ENCODE measurements at regions of chr2 and their contacts with region 1.

Region 1: GRCh38 chr2:14016289-14016955 is 616.1 kb upstream of the LRATD1 start:
- DNase-seq: no peak
- H3K4me3 ChIP-seq: no peak overlapping the region
- H3K27ac ChIP-seq: no peak overlapping the region
- H3K4me1 ChIP-seq: no peaks in the 10 kb centered on the region
- H3K27me3 ChIP-seq: no peaks in the 10 kb centered on the region
- CTCF ChIP-seq: no peak
- EP300 ChIP-seq: no peak
- POLR2A ChIP-seq: no peak

Region 2: DNA sequence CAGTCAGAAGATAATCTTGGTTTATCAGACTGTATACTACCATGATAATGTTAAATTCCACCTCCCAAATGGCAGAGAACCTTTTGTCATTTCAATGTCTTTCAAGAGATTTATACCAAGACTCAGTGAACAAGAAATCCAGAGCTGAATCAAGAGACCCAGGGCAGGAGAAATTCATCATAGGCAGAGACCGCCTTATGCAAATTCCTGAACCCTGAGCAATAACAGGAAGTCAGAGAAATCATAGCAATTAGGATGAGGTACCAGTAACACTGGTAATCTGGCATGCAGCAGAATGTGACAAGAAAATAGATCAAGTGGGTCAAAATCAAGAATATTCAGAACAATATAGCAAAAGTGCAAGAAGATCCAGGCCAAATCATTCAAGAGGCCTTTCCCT is 203.7 kb after region 1 on chr2:
- in situ Hi-C with region 1: no loop called
- intact Hi-C with region 1: no loop called
- DNase-seq: no peak
- H3K4me3 ChIP-seq: no peak overlapping the region
- H3K27ac ChIP-seq: no peak overlapping the region
- H3K4me1 ChIP-seq: no peaks in the 10 kb centered on the region
- H3K27me3 ChIP-seq: no peaks in the 10 kb centered on the region
- CTCF ChIP-seq: no peak
- EP300 ChIP-seq: no peak
- POLR2A ChIP-seq: no peak

Region 3: GRCh38 chr2:15449556-15450236 is 1433.3 kb after region 1 on chr2:
- in situ Hi-C with region 1: no loop called
- intact Hi-C with region 1: loop called (anchors 5 kb)
- DNase-seq: no peak
- H3K4me3 ChIP-seq: no peak overlapping the region
- H3K27ac ChIP-seq: no peak overlapping the region
- H3K4me1 ChIP-seq: no peaks in the 10 kb centered on the region
- H3K27me3 ChIP-seq: no peaks in the 10 kb centered on the region
- CTCF ChIP-seq: no peak
- EP300 ChIP-seq: no peak
- POLR2A ChIP-seq: no peak